GM12878 (cell line): ENCODE measurements at regions of chr14 and their contacts with region 1.

Region 1: DNA sequence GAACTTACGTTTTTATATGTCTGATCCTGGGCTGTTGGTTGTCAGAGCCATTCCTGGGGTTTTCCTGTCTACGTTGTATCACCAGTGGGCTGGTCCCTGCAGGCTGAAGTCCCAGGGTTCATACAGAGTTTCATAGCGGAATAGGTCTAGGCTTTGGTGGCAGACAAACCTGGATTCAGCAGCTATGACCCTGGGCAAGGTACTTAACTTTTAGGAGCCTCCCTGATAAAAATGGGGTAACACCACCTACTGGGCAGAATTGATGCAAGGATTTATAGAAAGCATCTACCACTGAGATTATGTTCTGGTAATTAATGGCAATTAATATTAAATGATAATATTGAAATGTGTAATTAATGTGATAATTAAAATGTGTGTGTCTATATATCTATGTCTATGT is 141.2 kb downstream of the SYNE2 start:
- DNase-seq: no peak
- ATAC-seq: no peak
- H3K4me3 ChIP-seq: no peak overlapping the region
- H3K27ac ChIP-seq: no peak overlapping the region
- H3K4me1 ChIP-seq: no peaks in the 10 kb centered on the region; the same call in 1 of the 2 replicates
- H3K27me3 ChIP-seq: no peaks in the 10 kb centered on the region
- CTCF ChIP-seq: peak in 2 of 3 experiments; percentile 13 to 37; a peak in 1 of 6 replicates
- EP300 ChIP-seq: no peak
- POLR2A ChIP-seq: no peak
- RAD21 ChIP-seq: peak; percentile 45; the same call in 1 of the 2 replicates

Region 2: GRCh38 chr14:63800651-63801375 is 193.2 kb before region 1 on chr14:
- CTCF ChIA-PET with region 1: interaction called, 6 read pairs
- POLR2A ChIA-PET with region 1: no interaction called
- RAD21 ChIA-PET with region 1: interaction called, 4 read pairs
- SMC1A ChIA-PET with region 1: interaction called, 11 read pairs
- in situ Hi-C with region 1: no loop called
- intact Hi-C with region 1: no loop called
- DNase-seq: no peak
- ATAC-seq: no peak
- H3K4me3 ChIP-seq: no peak overlapping the region
- H3K27ac ChIP-seq: no peak overlapping the region
- H3K4me1 ChIP-seq: no peaks in the 10 kb centered on the region
- H3K27me3 ChIP-seq: no peaks in the 10 kb centered on the region
- CTCF ChIP-seq: no peak
- EP300 ChIP-seq: no peak
- POLR2A ChIP-seq: no peak
- RAD21 ChIP-seq: no peak

Region 3: GRCh38 chr14:63922696-63923421 is 71.1 kb before region 1 on chr14:
- CTCF ChIA-PET with region 1: no interaction called
- POLR2A ChIA-PET with region 1: no interaction called
- RAD21 ChIA-PET with region 1: no interaction called
- SMC1A ChIA-PET with region 1: no interaction called
- in situ Hi-C with region 1: no loop called
- intact Hi-C with region 1: no loop called
- DNase-seq: no peak
- ATAC-seq: peak; percentile 61
- H3K4me3 ChIP-seq: no peak overlapping the region
- H3K27ac ChIP-seq: no peak overlapping the region
- H3K4me1 ChIP-seq: no peaks in the 10 kb centered on the region
- H3K27me3 ChIP-seq: no peaks in the 10 kb centered on the region
- CTCF ChIP-seq: no peak
- EP300 ChIP-seq: no peak
- POLR2A ChIP-seq: no peak
- RAD21 ChIP-seq: no peak

Region 4: GRCh38 chr14:64012720-64013119 is 18.7 kb after region 1 on chr14:
- CTCF ChIA-PET with region 1: interaction called, 4 read pairs
- POLR2A ChIA-PET with region 1: no interaction called
- RAD21 ChIA-PET with region 1: no interaction called
- SMC1A ChIA-PET with region 1: interaction called, 10 read pairs
- in situ Hi-C with region 1: no loop called
- intact Hi-C with region 1: no loop called
- DNase-seq: no peak
- ATAC-seq: no peak
- H3K4me3 ChIP-seq: no peak overlapping the region
- H3K27ac ChIP-seq: no peak overlapping the region
- H3K4me1 ChIP-seq: no peaks in the 10 kb centered on the region
- H3K27me3 ChIP-seq: no peaks in the 10 kb centered on the region
- CTCF ChIP-seq: no peak
- EP300 ChIP-seq: no peak
- POLR2A ChIP-seq: no peak
- RAD21 ChIP-seq: no peak

Region 5: DNA sequence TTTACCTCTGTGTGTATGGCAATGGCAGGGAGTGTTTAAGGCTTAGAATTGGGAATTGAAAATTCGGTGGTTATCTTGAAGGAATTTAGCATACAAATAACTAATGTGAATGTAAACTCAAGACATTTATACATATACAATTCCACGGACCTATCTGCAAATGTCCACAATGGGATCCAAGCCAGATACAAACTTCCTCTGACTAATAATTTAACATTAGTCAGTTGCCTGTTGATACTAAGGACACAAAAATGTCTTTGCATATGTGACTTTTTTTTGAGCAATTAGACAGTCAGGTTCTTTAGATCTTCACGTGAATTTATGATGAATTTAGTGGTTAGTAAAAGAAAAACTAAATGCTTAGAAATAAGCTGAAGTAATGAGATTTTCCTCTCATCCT is 259.7 kb after region 1 on chr14:
- CTCF ChIA-PET with region 1: no interaction called
- POLR2A ChIA-PET with region 1: no interaction called
- RAD21 ChIA-PET with region 1: no interaction called
- SMC1A ChIA-PET with region 1: no interaction called
- in situ Hi-C with region 1: no loop called
- intact Hi-C with region 1: no loop called
- DNase-seq: no peak
- ATAC-seq: no peak
- H3K4me3 ChIP-seq: no peak overlapping the region
- H3K27ac ChIP-seq: no peak overlapping the region
- H3K4me1 ChIP-seq: no peaks in the 10 kb centered on the region
- H3K27me3 ChIP-seq: no peaks in the 10 kb centered on the region
- CTCF ChIP-seq: no peak
- EP300 ChIP-seq: no peak
- POLR2A ChIP-seq: no peak
- RAD21 ChIP-seq: no peak